ENCODE measurements at regions of chr4 and their contacts with region 1.

Region 1: DNA sequence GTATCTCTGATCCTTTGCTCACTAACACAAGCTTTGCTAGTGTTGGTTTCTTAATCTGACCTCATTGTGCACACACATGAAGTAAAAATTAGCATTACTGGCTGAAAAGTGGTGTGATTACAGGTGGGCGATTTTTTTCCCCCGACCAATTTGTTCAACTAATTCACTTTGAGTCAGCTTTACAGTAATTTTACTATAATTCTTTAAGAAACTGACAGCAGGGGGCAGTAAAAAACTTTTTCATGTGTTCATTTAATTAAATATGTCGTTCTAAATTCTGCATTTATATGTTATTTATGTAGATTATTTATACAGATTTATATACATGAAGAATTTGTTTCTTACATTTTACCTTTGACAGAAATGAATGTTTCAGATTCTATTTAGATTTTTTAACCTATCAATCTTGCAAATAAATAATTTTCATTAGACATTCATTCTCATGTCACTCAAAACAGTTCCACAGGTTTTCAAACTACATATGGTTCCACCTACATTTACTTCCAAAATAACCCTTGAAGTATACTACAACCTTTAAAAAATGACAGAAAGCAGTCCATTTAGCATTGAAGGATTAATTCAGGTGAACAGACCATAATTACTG is 17.5 kb downstream of the PALLD start:
- DNase-seq: no peak
- ATAC-seq: no peak
- H3K4me3 Mint-ChIP-seq: no peak overlapping the region
- H3K27ac Mint-ChIP-seq: no peak overlapping the region
- H3K4me1 Mint-ChIP-seq: peaks cover 39% of the 10 kb centered on the region
- H3K27me3 Mint-ChIP-seq: peaks cover 4% of the 10 kb centered on the region

Region 2: DNA sequence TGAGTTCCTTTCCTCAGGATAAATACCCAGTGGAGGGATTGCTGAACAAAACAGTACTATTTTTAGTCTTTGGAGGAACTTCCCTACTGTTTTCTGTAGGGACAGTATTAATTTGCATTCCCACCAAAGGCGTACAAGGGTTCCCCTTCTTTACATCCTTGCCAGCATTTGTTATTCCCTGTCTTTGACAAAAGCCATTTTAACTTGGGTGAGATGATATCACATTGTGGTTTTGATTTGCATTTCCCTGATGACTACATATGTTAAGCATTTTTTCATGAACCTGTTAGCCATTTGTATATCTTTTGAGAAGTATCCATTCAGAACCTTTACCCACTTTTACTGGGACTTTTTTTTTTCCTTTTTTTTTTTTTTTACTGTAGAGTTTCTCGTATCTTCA is 548.2 kb before region 1 on chr4:
- CTCF ChIA-PET with region 1: no interaction called
- POLR2A ChIA-PET with region 1: no interaction called
- DNase-seq: no peak
- ATAC-seq: no peak
- H3K4me3 Mint-ChIP-seq: no peak overlapping the region
- H3K27ac Mint-ChIP-seq: no peak overlapping the region
- H3K4me1 Mint-ChIP-seq: no peaks in the 10 kb centered on the region
- H3K27me3 Mint-ChIP-seq: no peaks in the 10 kb centered on the region

Region 3: GRCh38 chr4:168480931-168481611 is 33.3 kb before region 1 on chr4:
- CTCF ChIA-PET with region 1: interaction called, 7 read pairs
- POLR2A ChIA-PET with region 1: interaction called, 14 read pairs
- DNase-seq: peak; percentile 74
- ATAC-seq: peak; percentile 63
- H3K4me3 Mint-ChIP-seq: peak overlapping the region; percentile 96
- H3K27ac Mint-ChIP-seq: peak overlapping the region; percentile 97
- H3K4me1 Mint-ChIP-seq: peaks cover 59% of the 10 kb centered on the region
- H3K27me3 Mint-ChIP-seq: no peaks in the 10 kb centered on the region